ENCODE measurements at regions of chr9 and their contacts with region 1.

Region 1: DNA sequence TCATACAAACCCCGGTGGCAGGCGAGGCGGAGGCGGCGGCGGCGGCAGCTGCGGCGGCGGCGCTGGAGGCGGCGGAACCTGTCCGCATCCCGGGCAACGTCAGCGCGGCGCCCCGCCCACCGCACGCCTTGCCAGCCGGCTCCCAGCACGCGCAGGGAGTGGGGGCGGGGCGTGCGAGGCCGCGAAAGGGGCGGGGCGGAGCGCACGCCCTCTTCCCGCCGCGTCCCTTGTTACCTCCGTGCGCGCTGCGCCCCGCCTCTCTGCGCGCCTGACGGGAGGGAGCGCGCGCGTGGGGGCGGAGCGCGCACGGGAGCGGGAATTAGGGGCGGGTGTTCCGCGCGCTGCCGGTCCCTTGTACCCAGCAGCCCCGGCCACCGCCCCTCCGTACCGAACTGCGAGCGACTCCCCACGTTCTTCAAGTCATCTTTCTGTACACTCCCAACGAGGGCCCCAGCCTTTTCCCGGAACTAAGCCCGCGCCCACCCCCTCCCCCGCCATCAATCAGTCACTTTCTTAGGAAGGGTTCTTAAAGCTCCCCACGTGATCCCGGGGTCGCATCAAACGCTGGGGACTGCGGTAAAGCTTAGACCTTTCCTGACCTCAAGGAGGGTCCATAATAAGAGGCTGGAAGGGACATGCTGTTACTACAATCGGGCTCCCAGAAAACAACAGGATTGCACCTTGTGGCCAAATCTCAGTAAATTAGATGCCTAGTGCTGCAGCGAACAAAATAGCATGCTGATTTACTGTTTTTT is at the start of gene AGTPBP1:
- ATAC-seq: peak; percentile 67 to 89 (median 85)
- H3K4me3 ChIP-seq: peak within 1 kb of the TSS; percentile 70 to 95 (median 77)
- H3K27ac ChIP-seq: peak within 1 kb of the TSS; percentile 85 to 87
- H3K4me1 ChIP-seq: peaks cover 8 to 16% of the 10 kb centered on the region in 2 donors
- total RNA-seq, gene AGTPBP1: 16.0 to 86.5 (median 66.2) TPM

Region 2: DNA sequence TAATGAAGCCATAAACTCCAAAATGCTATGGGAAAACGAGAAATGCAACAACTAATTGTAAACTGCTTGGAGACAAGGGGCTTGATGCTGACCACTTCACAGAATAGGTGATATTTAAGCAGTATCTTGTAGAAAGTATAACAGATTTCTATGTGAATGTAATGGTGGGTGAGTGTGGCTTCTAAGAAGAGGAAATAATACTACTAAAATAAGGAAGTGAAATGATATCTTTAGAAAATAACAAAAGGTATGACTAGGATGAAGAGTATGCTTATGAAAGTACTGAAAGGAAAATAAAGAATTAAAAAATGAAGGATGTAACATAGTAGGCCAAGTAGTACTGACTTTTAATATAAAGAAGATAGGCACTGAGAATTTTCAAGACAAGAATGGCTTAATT is 94.5 kb before region 1 on chr9:
- in situ Hi-C with region 1: loop called in 1 of 9 experiments (anchors 25 kb)
- ATAC-seq: no peak
- H3K4me3 ChIP-seq: no peak overlapping the region
- H3K27ac ChIP-seq: no peak overlapping the region
- H3K4me1 ChIP-seq: no peaks in the 10 kb centered on the region

Region 3: GRCh38 chr9:86368871-86369521 is 626.9 kb after region 1 on chr9:
- in situ Hi-C with region 1: no loop called
- ATAC-seq: peak in 2 of 8 experiments; percentile 38 to 84
- H3K4me3 ChIP-seq: no peak overlapping the region
- H3K27ac ChIP-seq: no peak overlapping the region
- H3K4me1 ChIP-seq: no peaks in the 10 kb centered on the region

Measured in motor neuron (in vitro differentiated cells).